Dorsolateral prefrontal cortex (tissue), 120 donors: ENCODE measurements at regions of chr15 and their contacts with region 1.

Region 1: GRCh38 chr15:43440721-43441281 is 52.2 kb downstream of the TP53BP1 start:
- DNase-seq: peak in 5 of 10 donors; percentile 24 to 69 (median 48)
- H3K4me3 ChIP-seq: peak overlapping the region in 32 of 59 donors; percentile 0 to 43 (median 22)
- H3K27ac ChIP-seq: peak overlapping the region; percentile 38 to 92 (median 85)
- H3K27me3 ChIP-seq: no peaks in the 10 kb centered on the region
- CTCF ChIP-seq: peak in 55 of 56 donors; percentile 36 to 84 (median 68)

Region 2: GRCh38 chr15:43370975-43371974 is 69.5 kb before region 1 on chr15 and contains the starts of genes TUBGCP4 and ZSCAN29:
- intact Hi-C with region 1: loop called in 1 of 2 experiments (anchors 2 kb)
- DNase-seq: peak; percentile 64 to 91 (median 70)
- H3K4me3 ChIP-seq: peak within 1 kb of the TSS; percentile 54 to 99 (median 92)
- H3K27ac ChIP-seq: peak within 1 kb of the TSS in 52 of 59 donors; percentile 0 to 93 (median 71)
- H3K27me3 ChIP-seq: no peaks in the 10 kb centered on the region
- CTCF ChIP-seq: peak in 24 of 56 donors; percentile 5 to 48 (median 16)
- total RNA-seq, gene TUBGCP4: 19.0 to 42.6 (median 29.7) TPM
- total RNA-seq, gene ZSCAN29: 16.1 to 41.9 (median 26.0) TPM

Region 3: DNA sequence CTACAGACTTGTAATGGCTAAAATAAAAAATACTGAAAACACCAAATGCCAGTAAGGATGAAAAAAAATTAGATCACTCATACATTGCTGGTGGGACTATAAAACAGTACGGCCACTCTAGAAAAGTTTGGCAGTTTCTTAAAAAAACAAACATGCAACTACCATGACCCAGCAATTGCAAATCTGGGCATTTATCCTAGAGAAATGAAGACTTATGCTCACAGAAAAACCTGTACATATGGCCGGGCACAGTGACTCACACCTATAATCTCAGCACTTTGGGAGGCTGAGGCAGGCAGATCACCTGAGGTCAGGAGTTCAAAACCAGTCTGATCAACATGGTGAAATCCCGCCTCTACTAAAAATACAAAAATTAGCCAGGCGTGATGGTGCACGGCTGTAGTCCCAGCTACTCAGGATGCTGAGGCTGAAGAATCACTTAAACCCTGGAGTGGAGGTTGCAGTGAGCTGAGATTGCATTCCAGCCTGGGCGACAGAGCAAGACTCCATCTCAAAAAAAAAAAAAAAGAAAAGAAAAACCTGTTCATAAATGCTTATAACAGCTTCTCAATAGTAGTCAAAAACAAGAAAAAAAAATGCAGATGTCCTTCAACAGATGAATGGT is 46.6 kb after region 1 on chr15:
- intact Hi-C with region 1: no loop called
- DNase-seq: no peak
- H3K4me3 ChIP-seq: no peak overlapping the region
- H3K27ac ChIP-seq: no peak overlapping the region
- H3K27me3 ChIP-seq: no peaks in the 10 kb centered on the region
- CTCF ChIP-seq: no peak

Region 4: GRCh38 chr15:43498988-43499387 is 58.2 kb after region 1 on chr15:
- intact Hi-C with region 1: loop called in 1 of 2 experiments (anchors 5 kb)
- DNase-seq: no peak
- H3K4me3 ChIP-seq: no peak overlapping the region
- H3K27ac ChIP-seq: no peak overlapping the region
- H3K27me3 ChIP-seq: no peaks in the 10 kb centered on the region
- CTCF ChIP-seq: no peak

Region 5: DNA sequence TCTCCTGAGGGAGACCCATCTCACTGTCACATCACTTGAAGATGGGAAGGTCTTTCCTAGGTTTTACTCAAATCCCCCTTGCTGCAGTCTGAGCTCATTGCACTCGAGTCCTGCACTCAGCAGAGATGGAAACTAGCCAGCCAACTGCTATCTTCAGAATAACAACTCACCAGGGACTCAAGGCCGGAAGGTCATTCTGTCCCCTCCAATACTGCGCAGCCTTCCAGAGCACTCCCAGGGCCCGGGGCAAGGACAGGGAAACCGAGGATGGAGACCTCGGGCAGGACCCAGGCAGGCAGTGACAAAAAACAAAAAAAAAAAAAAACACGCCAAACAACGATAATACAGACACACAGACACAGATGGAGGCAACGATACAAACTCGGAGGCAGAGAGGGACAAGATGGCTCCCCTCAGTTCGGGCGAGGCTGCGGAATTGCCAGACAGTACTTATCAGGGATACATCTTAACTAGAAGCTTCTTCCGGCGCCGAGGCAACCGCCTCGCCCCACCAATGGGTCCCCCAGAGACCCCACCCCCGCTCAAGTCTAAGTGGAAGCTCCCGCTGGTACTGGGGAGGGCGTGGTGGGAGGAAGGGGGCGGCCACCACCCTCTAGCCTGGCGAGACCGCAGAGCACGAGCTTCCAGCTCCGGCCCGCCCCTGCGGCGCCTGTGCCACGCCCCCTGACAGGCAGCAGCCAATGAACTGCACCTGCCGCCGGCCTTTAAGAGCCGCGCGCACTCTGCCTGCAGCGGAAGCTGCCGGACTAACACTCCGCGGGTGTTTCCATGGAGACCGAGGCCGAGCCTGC is 69.6 kb after region 1 on chr15:
- intact Hi-C with region 1: loop called in 1 of 2 experiments (anchors 5 kb)
- DNase-seq: peak; percentile 97 to 100 (median 99)
- H3K4me3 ChIP-seq: peak overlapping the region; percentile 47 to 98 (median 81)
- H3K27ac ChIP-seq: peak overlapping the region; percentile 82 to 99 (median 97)
- H3K27me3 ChIP-seq: no peaks in the 10 kb centered on the region
- CTCF ChIP-seq: peak in 46 of 56 donors; percentile 11 to 55 (median 30)